ENCODE measurements at regions of chr12 and their contacts with region 1.

Region 1: GRCh38 chr12:58750484-58750883 is 169.8 kb downstream of the LRIG3 start:
- DNase-seq: no peak
- H3K4me3 ChIP-seq: no peak overlapping the region
- H3K27ac ChIP-seq: no peak overlapping the region
- H3K4me1 ChIP-seq: no peaks in the 10 kb centered on the region
- H3K27me3 ChIP-seq: peaks cover 0 to 2% of the 10 kb centered on the region in 2 experiments
- CTCF ChIP-seq: no peak
- POLR2A ChIP-seq: no peak

Region 2: GRCh38 chr12:58819985-58820384 is 69.5 kb after region 1 on chr12:
- CTCF ChIA-PET with region 1: no interaction called
- POLR2A ChIA-PET with region 1: no interaction called
- dilution Hi-C with region 1: no loop called
- intact Hi-C with region 1: loop called (anchors 2 kb)
- DNase-seq: no peak
- H3K4me3 ChIP-seq: no peak overlapping the region
- H3K27ac ChIP-seq: no peak overlapping the region
- H3K4me1 ChIP-seq: no peaks in the 10 kb centered on the region
- H3K27me3 ChIP-seq: no peaks in the 10 kb centered on the region
- CTCF ChIP-seq: no peak
- POLR2A ChIP-seq: no peak